ENCODE measurements at regions of chr2 and their contacts with region 1.

Region 1: GRCh38 chr2:113756355-113757137 is at the start of gene SLC35F5:
- DNase-seq: peak; percentile 93
- ATAC-seq: peak; percentile 99
- total RNA-seq, gene SLC35F5: 48.5 to 62.2 TPM

Region 2: GRCh38 chr2:113692698-113693428 is 63.7 kb before region 1 on chr2:
- intact Hi-C with region 1: no loop called
- DNase-seq: no peak
- ATAC-seq: no peak

Region 3: DNA sequence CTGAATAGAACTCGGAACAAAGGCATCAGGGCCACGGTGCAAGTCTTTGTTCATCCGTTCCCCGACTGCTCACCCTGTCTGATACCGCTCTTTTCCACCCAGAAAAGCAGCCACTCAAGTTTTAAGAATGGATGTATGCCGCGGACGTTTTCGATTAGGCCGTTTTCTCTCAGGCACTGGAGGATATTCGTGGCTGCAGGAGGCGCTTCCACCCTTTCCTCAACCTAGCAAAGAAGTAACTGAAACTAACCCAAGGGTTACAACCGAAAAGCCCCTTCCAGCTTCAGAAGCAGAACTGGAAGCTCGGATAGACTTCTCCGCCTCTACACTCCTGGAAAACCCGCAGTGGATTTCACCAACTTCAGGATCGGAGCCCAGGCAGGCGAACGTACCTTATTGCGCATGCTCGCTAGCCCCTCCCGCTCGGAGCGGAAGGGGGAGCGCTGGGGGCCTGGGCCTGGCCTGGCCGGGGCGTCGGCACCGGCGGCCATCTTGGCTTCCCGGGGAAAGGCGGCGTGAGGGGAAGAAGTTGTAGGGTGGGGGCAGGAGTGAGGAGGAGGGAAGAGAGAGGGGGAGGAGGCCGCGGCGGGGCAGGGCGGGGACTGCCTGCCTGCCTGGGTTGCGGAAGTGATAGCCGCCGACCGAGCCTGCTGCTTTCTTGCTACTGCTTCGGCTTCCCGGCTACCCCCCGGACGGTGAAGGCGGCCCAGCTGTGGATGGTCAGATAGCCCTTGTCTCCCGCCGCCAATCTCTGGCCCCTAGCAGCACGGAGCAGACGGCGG is 133.1 kb after region 1 on chr2 and contains the start of gene ACTR3:
- intact Hi-C with region 1: loop called in 1 of 2 experiments (anchors 2 kb)
- DNase-seq: peak; percentile 98
- ATAC-seq: peak; percentile 97
- total RNA-seq, gene ACTR3: 132 to 184 TPM

Region 4: DNA sequence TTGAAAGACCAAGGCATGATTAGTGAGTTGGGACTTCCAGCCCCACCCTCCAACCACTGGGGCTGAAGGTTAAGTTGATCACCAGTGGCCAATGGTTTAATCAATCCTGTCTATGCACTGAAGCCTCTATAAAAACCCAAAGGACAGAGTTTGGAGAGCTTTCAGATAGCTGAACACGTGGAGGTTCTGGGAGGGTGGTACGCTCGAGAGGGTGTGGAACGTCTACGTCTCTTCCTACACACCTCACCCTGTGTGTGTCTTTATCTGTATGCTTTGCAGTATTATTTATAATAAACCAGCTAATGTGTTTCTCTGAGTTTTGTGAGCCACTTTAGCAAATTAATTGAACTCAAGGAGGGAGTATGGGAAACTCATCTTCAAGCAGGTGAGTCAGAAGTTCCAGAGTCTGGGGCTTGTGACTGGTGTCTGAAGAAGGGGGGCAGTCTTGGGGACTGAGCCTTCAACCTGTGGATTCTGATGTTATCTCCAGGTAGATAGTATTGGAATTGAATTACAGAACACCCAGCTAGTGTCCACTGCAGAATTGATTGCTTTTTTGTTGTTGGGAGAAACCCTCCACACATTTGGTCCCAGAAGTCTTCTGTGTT is 153.7 kb after region 1 on chr2:
- intact Hi-C with region 1: no loop called
- DNase-seq: no peak
- ATAC-seq: peak in 1 of 2 donors; percentile 24

Region 5: GRCh38 chr2:113965644-113966043 is 209.1 kb after region 1 on chr2:
- intact Hi-C with region 1: loop called in 1 of 2 experiments (anchors 10 kb)
- DNase-seq: no peak
- ATAC-seq: peak in 1 of 2 donors; percentile 29

Measured in left cardiac atrium (tissue), 4 donors.